ENCODE measurements at regions of chr1 and their contacts with region 1.

Region 1: GRCh38 chr1:110106013-110106941 is 6.0 kb upstream of the UBL4B start:
- DNase-seq: peak; percentile 61 to 80 (median 69)
- H3K4me3 ChIP-seq: no peak overlapping the region
- H3K27ac ChIP-seq: no peak overlapping the region
- H3K4me1 ChIP-seq: peaks cover 0 to 9% (median 2%) of the 10 kb centered on the region in 4 experiments
- H3K27me3 ChIP-seq: peaks cover 0 to 14% (median 8%) of the 10 kb centered on the region in 5 experiments

Region 2: GRCh38 chr1:109864047-109864822 is 242.0 kb before region 1 on chr1:
- CTCF ChIA-PET with region 1: no interaction called
- POLR2A ChIA-PET with region 1: no interaction called
- DNase-seq: peak; percentile 82 to 93 (median 90)
- H3K4me3 ChIP-seq: peak overlapping the region in 1 of 7 experiments; percentile 40
- H3K27ac ChIP-seq: peak overlapping the region in 1 of 2 experiments; percentile 4
- H3K4me1 ChIP-seq: peaks cover 0 to 8% (median 3%) of the 10 kb centered on the region in 4 experiments
- H3K27me3 ChIP-seq: peaks cover 0 to 2% (median 0%) of the 10 kb centered on the region in 5 experiments

Region 3: GRCh38 chr1:109931189-109931731 is 175.0 kb before region 1 on chr1:
- CTCF ChIA-PET with region 1: no interaction called
- POLR2A ChIA-PET with region 1: no interaction called
- DNase-seq: no peak
- H3K4me3 ChIP-seq: no peak overlapping the region
- H3K27ac ChIP-seq: no peak overlapping the region
- H3K4me1 ChIP-seq: peaks cover 0 to 9% (median 8%) of the 10 kb centered on the region in 4 experiments
- H3K27me3 ChIP-seq: no peaks in the 10 kb centered on the region

Region 4: GRCh38 chr1:110053557-110054428 is 52.5 kb before region 1 on chr1:
- CTCF ChIA-PET with region 1: interaction called, 221 read pairs
- POLR2A ChIA-PET with region 1: no interaction called
- DNase-seq: peak in 2 of 3 donors; percentile 40 to 56
- H3K4me3 ChIP-seq: no peak overlapping the region
- H3K27ac ChIP-seq: no peak overlapping the region
- H3K4me1 ChIP-seq: no peaks in the 10 kb centered on the region
- H3K27me3 ChIP-seq: no peaks in the 10 kb centered on the region

Region 5: GRCh38 chr1:110060034-110060661 is 46.1 kb before region 1 on chr1:
- CTCF ChIA-PET with region 1: interaction called, 221 read pairs
- POLR2A ChIA-PET with region 1: no interaction called
- DNase-seq: peak; percentile 48 to 72 (median 60)
- H3K4me3 ChIP-seq: no peak overlapping the region
- H3K27ac ChIP-seq: no peak overlapping the region
- H3K4me1 ChIP-seq: no peaks in the 10 kb centered on the region
- H3K27me3 ChIP-seq: peaks cover 0 to 6% (median 3%) of the 10 kb centered on the region in 5 experiments

Region 6: GRCh38 chr1:110067893-110068645 is 38.2 kb before region 1 on chr1:
- CTCF ChIA-PET with region 1: interaction called, 44 read pairs
- POLR2A ChIA-PET with region 1: interaction called, 3 read pairs
- DNase-seq: peak in 2 of 3 donors; percentile 40 to 57
- H3K4me3 ChIP-seq: peak overlapping the region in 5 of 7 experiments; percentile 16 to 42 (median 38)
- H3K27ac ChIP-seq: no peak overlapping the region
- H3K4me1 ChIP-seq: peaks cover 0 to 36% (median 22%) of the 10 kb centered on the region in 4 experiments
- H3K27me3 ChIP-seq: peaks cover 4 to 81% (median 51%) of the 10 kb centered on the region in 5 experiments

Region 7: GRCh38 chr1:110076789-110077500 is 29.3 kb before region 1 on chr1:
- CTCF ChIA-PET with region 1: interaction called, 20 read pairs
- POLR2A ChIA-PET with region 1: no interaction called
- DNase-seq: no peak
- H3K4me3 ChIP-seq: no peak overlapping the region
- H3K27ac ChIP-seq: no peak overlapping the region
- H3K4me1 ChIP-seq: peaks cover 0 to under 1% (median 0%) of the 10 kb centered on the region in 4 experiments
- H3K27me3 ChIP-seq: peaks cover 8 to 50% (median 41%) of the 10 kb centered on the region in 5 experiments

Region 8: DNA sequence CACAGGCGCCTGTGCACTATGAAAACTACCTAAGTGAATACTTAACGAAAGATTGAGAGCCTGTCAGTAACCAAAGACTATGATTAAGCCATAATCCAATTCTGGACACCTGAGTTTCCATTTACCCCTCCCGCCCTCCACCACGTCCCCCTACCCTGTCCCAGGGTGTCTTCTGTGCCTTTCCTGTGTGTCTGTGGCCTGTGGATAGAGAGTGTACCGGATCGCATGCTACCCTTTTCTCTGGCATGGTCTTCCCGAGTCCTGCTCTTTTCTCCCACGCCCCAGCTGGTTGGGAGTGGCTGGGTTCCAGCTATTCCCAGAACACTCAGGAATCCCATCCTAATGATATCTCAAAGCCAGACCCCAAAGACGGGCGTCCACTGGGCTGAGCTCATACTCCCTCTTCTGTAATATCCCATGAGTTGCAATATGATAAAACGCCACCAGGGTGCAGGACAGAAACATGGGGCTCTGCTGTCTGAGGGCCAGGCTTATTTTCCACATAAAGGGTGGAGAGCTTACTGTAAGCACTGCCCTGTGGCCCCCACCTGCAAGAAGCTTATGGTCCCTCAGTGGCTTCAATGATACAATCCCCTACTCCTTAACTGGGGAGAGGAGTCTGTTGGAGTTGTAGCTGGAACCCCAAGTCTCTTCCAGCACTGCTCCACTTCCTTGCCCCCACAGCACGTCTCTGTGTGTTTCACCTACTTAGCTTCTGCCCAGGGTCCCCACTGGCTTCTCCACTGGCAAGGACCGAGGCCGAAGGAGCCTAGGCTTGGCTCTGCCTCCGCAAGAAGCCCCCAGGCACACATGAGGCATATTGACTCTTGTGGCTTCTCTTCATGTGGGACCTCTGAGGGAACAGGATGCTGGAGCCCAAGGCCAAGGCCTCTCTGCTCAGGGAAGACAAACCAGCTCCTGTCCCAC is 18.2 kb before region 1 on chr1:
- CTCF ChIA-PET with region 1: interaction called, 176 read pairs
- POLR2A ChIA-PET with region 1: interaction called, 3 read pairs
- DNase-seq: peak; percentile 54 to 74 (median 62)
- H3K4me3 ChIP-seq: no peak overlapping the region
- H3K27ac ChIP-seq: no peak overlapping the region
- H3K4me1 ChIP-seq: peaks cover 0 to 26% (median 20%) of the 10 kb centered on the region in 4 experiments
- H3K27me3 ChIP-seq: peaks cover 7 to 41% (median 26%) of the 10 kb centered on the region in 5 experiments

Region 9: DNA sequence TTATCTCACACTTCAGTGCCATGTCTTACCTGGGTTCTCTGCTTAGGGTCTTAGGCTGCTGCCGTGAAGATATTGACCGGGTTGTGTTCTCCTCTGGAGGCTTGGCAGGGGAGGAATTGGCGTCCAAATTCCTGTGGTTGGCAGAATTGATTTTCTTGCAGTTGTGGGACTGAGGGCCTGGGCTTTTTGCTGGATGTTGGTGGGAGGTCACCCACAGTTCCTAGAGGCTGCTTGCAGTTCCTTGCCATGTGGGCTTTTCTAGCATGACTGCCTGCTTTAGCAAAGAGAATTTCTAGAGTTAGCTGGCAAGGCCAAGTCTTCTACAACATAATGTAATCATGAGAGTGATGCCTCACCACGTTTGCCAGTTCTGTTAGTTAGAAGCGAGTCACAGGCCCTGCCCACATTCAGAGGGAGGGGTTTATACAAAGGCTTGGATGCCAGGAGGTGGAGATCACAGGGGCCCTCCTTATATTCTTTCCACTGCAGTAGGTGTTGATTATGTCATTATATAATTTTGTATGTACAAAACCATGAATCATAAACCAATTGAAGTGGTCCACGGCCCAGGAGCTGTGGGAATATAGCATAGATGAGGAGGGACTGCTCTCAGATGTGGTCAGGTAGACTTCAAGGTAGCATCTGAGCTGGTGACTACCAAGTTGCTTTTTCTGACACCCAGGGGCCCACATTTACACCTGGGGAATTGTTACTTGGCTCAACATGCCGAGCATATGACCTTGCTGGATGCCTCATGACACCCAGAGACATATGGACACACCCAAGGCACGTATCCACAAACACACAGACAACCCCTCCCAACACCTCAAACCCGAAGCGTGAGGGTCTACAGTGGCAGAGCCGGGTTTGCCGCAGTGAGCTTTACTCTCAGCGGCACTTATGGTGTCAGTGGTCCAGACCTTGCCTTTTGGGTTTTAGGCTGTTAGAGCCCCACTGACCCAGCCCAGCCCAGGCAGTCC is 12.6 kb after region 1 on chr1:
- CTCF ChIA-PET with region 1: interaction called, 24 read pairs
- POLR2A ChIA-PET with region 1: interaction called, 3 read pairs
- DNase-seq: no peak
- H3K4me3 ChIP-seq: no peak overlapping the region
- H3K27ac ChIP-seq: no peak overlapping the region
- H3K4me1 ChIP-seq: no peaks in the 10 kb centered on the region
- H3K27me3 ChIP-seq: peaks cover 0 to 11% (median 4%) of the 10 kb centered on the region in 5 experiments